CD4-positive, alpha-beta memory T cell (primary cell): ENCODE measurements at regions of chr14 and their contacts with region 1.

Region 1: GRCh38 chr14:104865644-104866441 is 775 bp downstream of the CEP170B start:
- DNase-seq: peak in 1 of 5 donors; percentile 11
- H3K4me3 ChIP-seq: no peak overlapping the region
- H3K4me3 Mint-ChIP-seq: peak overlapping the region; percentile 26 to 73 (median 52)
- H3K27ac ChIP-seq: no peak overlapping the region
- H3K27ac Mint-ChIP-seq: no peak overlapping the region
- H3K4me1 ChIP-seq: peaks cover 16% of the 10 kb centered on the region
- H3K4me1 Mint-ChIP-seq: peaks cover 3 to 12% (median 3%) of the 10 kb centered on the region in 4 donors
- H3K27me3 ChIP-seq: no peaks in the 10 kb centered on the region
- H3K27me3 Mint-ChIP-seq: no peaks in the 10 kb centered on the region

Region 2: GRCh38 chr14:104768437-104769323 is 97.2 kb before region 1 on chr14:
- CTCF ChIA-PET with region 1: interaction called, 12 read pairs
- POLR2A ChIA-PET with region 1: no interaction called
- intact Hi-C with region 1: loop called (anchors 1 kb)
- DNase-seq: peak; percentile 83 to 89 (median 86)
- H3K4me3 ChIP-seq: no peak overlapping the region
- H3K4me3 Mint-ChIP-seq: no peak overlapping the region
- H3K27ac ChIP-seq: no peak overlapping the region
- H3K27ac Mint-ChIP-seq: peak overlapping the region in 4 of 7 donors; percentile 11 to 77 (median 56)
- H3K4me1 ChIP-seq: peaks cover 3% of the 10 kb centered on the region
- H3K4me1 Mint-ChIP-seq: peaks cover 0 to 4% (median under 1%) of the 10 kb centered on the region in 4 donors
- H3K27me3 ChIP-seq: no peaks in the 10 kb centered on the region
- H3K27me3 Mint-ChIP-seq: no peaks in the 10 kb centered on the region

Region 3: GRCh38 chr14:104826189-104826860 is 39.5 kb before region 1 on chr14:
- CTCF ChIA-PET with region 1: interaction called, 3 read pairs
- POLR2A ChIA-PET with region 1: no interaction called
- intact Hi-C with region 1: loop called (anchors 2 kb)
- DNase-seq: peak; percentile 88 to 97 (median 90)
- H3K4me3 ChIP-seq: peak overlapping the region; percentile 61 to 70
- H3K4me3 Mint-ChIP-seq: peak overlapping the region; percentile 66 to 93 (median 86)
- H3K27ac ChIP-seq: peak overlapping the region; percentile 14
- H3K27ac Mint-ChIP-seq: peak overlapping the region in 4 of 7 donors; percentile 29 to 92 (median 63)
- H3K4me1 ChIP-seq: peaks cover 21% of the 10 kb centered on the region
- H3K4me1 Mint-ChIP-seq: peaks cover 14 to 32% (median 24%) of the 10 kb centered on the region in 4 donors
- H3K27me3 ChIP-seq: no peaks in the 10 kb centered on the region
- H3K27me3 Mint-ChIP-seq: peaks cover 2 to 7% of the 10 kb centered on the region in 2 donors